MCF 10A (cell line): ENCODE measurements at regions of chr16 and their contacts with region 1.

Region 1: GRCh38 chr16:69565671-69566239 is at the start of gene NFAT5:
- DNase-seq: peak; percentile 85
- H3K4me3 Mint-ChIP-seq: peak within 1 kb of the TSS; percentile 99
- H3K27ac Mint-ChIP-seq: peak within 1 kb of the TSS; percentile 98
- H3K4me1 Mint-ChIP-seq: no peaks in the 10 kb centered on the region
- H3K27me3 Mint-ChIP-seq: no peaks in the 10 kb centered on the region
- CTCF ChIP-seq: no peak
- total RNA-seq, gene NFAT5: 35.8 and 46.4 TPM in 2 replicates

Region 2: GRCh38 chr16:69404275-69404805 is 161.4 kb before region 1 on chr16:
- CTCF ChIA-PET with region 1: no interaction called
- POLR2A ChIA-PET with region 1: interaction called, 11 read pairs
- intact Hi-C with region 1: no loop called
- DNase-seq: peak; percentile 24
- H3K4me3 Mint-ChIP-seq: no peak overlapping the region
- H3K27ac Mint-ChIP-seq: no peak overlapping the region
- H3K4me1 Mint-ChIP-seq: peaks cover 21% of the 10 kb centered on the region
- H3K27me3 Mint-ChIP-seq: no peaks in the 10 kb centered on the region
- CTCF ChIP-seq: no peak

Region 3: DNA sequence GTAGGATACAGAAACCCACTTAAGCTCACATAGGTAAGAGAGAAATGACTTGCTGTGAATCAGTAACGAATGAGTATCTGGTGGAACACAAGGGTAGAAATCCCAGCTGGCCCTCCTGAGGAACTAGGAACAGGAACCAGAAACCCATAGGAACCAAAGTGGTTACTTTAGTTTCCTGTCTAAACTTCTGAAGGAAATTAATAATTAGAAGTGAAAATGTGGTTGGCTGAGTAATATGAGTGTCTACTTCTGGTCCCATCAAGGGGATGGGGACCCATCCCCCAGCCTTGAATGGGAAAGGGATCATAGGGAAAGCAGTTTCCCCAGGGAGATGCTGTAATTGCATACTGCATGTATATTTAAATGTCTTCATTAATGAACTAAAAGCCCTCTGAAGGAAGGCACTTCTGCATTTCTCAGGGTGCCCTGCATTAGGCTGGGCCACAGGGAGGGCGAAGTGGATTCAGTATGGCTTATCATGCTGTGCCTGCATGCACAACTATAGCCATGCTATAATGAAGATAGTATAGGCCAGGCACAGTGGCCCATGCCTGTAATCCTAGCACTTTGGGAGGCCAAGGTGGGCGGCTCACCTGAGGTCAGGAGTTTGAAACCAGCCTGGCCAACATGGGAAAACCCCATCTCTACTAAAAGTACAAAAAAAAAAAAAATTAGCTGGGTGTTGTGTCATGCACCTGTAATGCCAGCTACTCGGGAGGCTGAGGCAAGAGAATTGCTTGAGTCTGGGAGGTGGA is 95.8 kb before region 1 on chr16:
- CTCF ChIA-PET with region 1: no interaction called
- POLR2A ChIA-PET with region 1: no interaction called
- intact Hi-C with region 1: loop called (anchors 10 kb)
- DNase-seq: no peak
- H3K4me3 Mint-ChIP-seq: no peak overlapping the region
- H3K27ac Mint-ChIP-seq: no peak overlapping the region
- H3K4me1 Mint-ChIP-seq: no peaks in the 10 kb centered on the region
- H3K27me3 Mint-ChIP-seq: no peaks in the 10 kb centered on the region
- CTCF ChIP-seq: no peak

Region 4: GRCh38 chr16:69554495-69554894 is 11.3 kb before region 1 on chr16:
- CTCF ChIA-PET with region 1: no interaction called
- POLR2A ChIA-PET with region 1: interaction called, 15 read pairs
- intact Hi-C with region 1: no loop called
- DNase-seq: no peak
- H3K4me3 Mint-ChIP-seq: no peak overlapping the region
- H3K27ac Mint-ChIP-seq: no peak overlapping the region
- H3K4me1 Mint-ChIP-seq: no peaks in the 10 kb centered on the region
- H3K27me3 Mint-ChIP-seq: no peaks in the 10 kb centered on the region
- CTCF ChIP-seq: no peak

Region 5: DNA sequence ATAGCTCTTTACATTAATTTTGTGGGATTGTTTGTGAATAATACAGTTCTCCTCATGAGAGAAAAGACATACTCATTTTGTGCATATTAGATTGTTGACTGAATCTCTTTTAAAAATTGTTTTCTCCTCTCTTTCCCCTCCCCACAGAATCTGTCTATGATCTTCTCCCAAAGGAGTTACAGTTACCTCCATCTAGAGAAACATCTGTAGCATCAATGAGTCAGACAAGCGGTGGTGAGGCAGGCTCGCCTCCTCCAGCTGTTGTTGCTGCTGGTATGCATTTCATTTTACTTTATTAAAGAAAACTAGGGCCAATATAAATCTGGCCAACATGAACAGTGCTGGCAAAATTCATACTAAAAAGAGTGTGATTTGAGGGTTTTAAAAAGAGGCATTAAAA is 60.5 kb after region 1 on chr16:
- CTCF ChIA-PET with region 1: no interaction called
- POLR2A ChIA-PET with region 1: interaction called, 5 read pairs
- intact Hi-C with region 1: loop called (anchors 5 kb)
- DNase-seq: no peak
- H3K4me3 Mint-ChIP-seq: no peak overlapping the region
- H3K27ac Mint-ChIP-seq: no peak overlapping the region
- H3K4me1 Mint-ChIP-seq: peaks cover 9% of the 10 kb centered on the region
- H3K27me3 Mint-ChIP-seq: no peaks in the 10 kb centered on the region
- CTCF ChIP-seq: no peak